ENCODE measurements at regions of chr19 and their contacts with region 1.

Region 1: DNA sequence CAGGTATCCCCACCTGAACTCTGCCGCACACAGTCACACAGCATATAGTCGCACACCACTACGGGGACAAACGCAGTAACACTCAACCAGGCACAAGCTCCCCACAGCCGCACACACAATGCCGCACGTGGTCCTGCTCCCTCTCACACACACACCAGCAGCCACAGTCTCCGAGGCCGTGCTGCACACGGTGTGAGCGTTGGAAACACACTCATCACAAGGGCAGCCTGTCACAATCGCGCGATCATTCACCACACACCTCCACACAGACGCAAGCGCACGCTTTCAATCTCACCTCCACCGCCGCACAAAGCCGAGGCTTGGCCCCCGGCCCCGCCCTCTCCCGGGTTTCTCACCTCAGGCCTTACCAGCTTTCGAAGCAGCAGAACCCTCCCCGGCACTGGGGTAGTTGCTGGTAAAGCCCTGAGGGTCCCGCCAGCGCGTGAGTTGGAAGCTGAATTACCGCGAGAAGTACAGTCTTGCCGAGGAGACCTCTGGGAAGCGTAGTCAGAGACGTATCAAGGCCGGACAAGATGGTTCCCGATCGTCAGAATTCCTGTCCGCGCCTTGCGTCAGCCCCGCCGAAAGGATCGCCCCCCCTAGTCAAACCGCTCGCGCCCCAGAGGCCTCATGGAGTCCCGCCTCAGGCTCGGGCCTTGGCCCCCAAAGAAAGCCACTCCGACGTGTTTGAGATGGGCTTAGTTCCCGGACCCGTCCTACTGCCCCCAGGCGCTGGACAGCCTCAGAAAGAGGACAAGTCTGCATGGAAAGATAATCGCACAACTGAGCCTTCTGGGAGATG is at the start of gene ZNF566:
- DNase-seq: peak; percentile 84 to 97 (median 95)
- H3K4me3 ChIP-seq: peak within 1 kb of the TSS; percentile 99
- H3K4me3 Mint-ChIP-seq: peak within 1 kb of the TSS; percentile 92 to 100 (median 98)
- H3K27ac ChIP-seq: peak within 1 kb of the TSS; percentile 90
- H3K27ac Mint-ChIP-seq: peak within 1 kb of the TSS; percentile 95 to 100 (median 98)
- H3K4me1 ChIP-seq: peaks cover 15% of the 10 kb centered on the region
- H3K4me1 Mint-ChIP-seq: peaks cover 34 to 42% (median 40%) of the 10 kb centered on the region in 3 donors
- H3K27me3 ChIP-seq: no peaks in the 10 kb centered on the region
- H3K27me3 Mint-ChIP-seq: peaks cover 0 to 4% of the 10 kb centered on the region in 2 donors
- total RNA-seq, gene ZNF566: 8.2 to 9.0 TPM

Region 2: DNA sequence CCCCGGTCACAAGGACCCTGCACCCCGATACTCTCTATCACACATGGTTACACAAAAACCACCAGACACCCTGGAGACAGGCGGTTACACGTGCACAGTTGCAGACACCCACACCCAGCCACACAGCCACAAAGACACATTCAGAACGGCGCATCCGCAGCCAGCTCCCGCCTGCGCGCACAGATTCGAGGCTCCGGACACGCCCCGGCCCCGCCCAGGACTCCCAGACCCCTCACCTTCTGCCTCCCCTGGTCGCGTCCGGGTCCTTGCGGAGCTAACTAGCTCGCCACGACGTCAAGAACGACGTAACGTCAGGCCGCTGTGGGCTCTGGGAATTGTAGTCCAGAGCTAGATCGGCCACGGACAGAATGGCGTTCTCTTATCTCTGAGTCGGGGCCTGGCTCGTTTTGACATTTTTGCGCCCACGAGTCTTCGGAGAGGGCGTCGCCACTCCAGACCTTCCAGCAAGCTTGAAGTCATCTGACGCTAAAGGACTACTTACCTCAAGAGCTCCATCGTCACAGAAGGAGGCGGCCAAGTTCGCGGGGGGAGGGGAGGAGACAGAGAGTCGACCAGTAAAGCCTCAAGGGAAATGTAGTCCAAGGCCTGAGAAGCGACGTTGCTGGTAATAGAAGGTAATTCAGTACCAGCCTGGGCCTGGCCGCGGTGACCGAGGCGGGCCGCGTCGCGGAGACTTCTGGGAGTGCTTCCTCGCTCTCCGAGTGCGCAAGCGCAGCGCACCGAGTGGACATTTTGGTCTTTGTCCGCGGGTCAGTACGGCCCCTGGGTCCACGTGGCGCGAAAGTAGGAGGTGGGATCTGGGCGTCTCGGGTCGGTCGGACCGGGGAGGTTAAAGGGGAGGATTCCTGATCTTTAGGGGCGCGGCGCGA is 274.7 kb before region 1 on chr19 and contains the starts of genes ZNF146 and ZNF565:
- CTCF ChIA-PET with region 1: no interaction called
- POLR2A ChIA-PET with region 1: interaction called, 21 read pairs
- DNase-seq: peak; percentile 93 to 97 (median 95)
- H3K4me3 ChIP-seq: peak within 1 kb of the TSS; percentile 96
- H3K4me3 Mint-ChIP-seq: no peak within 1 kb of the TSS
- H3K27ac ChIP-seq: peak within 1 kb of the TSS; percentile 95
- H3K27ac Mint-ChIP-seq: peak within 1 kb of the TSS in 1 of 8 donors; percentile 86
- H3K4me1 ChIP-seq: peaks cover 22% of the 10 kb centered on the region
- H3K4me1 Mint-ChIP-seq: peaks cover 23 to 36% (median 30%) of the 10 kb centered on the region in 3 donors
- H3K27me3 ChIP-seq: no peaks in the 10 kb centered on the region
- H3K27me3 Mint-ChIP-seq: no peaks in the 10 kb centered on the region
- total RNA-seq, gene ZNF146: 122 to 129 TPM
- total RNA-seq, gene ZNF565: 2.1 to 2.5 TPM

Region 3: GRCh38 chr19:36409841-36410240 is 79.5 kb before region 1 on chr19:
- CTCF ChIA-PET with region 1: no interaction called
- POLR2A ChIA-PET with region 1: no interaction called
- DNase-seq: no peak
- H3K4me3 ChIP-seq: no peak overlapping the region
- H3K4me3 Mint-ChIP-seq: peak overlapping the region in 1 of 7 donors; percentile 11
- H3K27ac ChIP-seq: no peak overlapping the region
- H3K27ac Mint-ChIP-seq: no peak overlapping the region
- H3K4me1 ChIP-seq: no peaks in the 10 kb centered on the region
- H3K4me1 Mint-ChIP-seq: peaks cover 0 to 18% (median 7%) of the 10 kb centered on the region in 3 donors
- H3K27me3 ChIP-seq: no peaks in the 10 kb centered on the region
- H3K27me3 Mint-ChIP-seq: no peaks in the 10 kb centered on the region

Region 4: DNA sequence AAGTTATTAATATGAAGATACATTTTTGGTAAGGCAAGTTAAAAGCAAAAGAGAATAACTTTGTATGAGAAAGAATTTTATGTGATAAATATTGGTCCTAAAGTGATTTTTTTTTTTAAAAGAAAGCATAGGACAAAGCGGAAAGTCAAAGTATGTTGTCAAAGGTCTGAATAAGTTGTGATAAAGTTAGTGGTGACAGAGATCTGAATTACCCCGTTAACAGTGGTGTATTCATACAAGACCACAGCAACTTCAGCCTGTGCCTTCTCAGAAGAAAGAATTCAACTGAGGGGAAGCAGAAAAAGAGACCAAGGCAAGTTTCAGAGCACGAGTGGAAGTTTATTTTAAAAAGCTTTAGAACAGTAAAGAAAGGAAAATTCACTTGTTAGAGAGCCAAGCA is 19.0 kb after region 1 on chr19:
- CTCF ChIA-PET with region 1: no interaction called
- POLR2A ChIA-PET with region 1: no interaction called
- DNase-seq: no peak
- H3K4me3 ChIP-seq: no peak overlapping the region
- H3K4me3 Mint-ChIP-seq: no peak overlapping the region
- H3K27ac ChIP-seq: no peak overlapping the region
- H3K27ac Mint-ChIP-seq: peak overlapping the region in 1 of 8 donors; percentile 32
- H3K4me1 ChIP-seq: no peaks in the 10 kb centered on the region
- H3K4me1 Mint-ChIP-seq: no peaks in the 10 kb centered on the region
- H3K27me3 ChIP-seq: no peaks in the 10 kb centered on the region
- H3K27me3 Mint-ChIP-seq: no peaks in the 10 kb centered on the region

Region 5: GRCh38 chr19:36528194-36528920 is 39.0 kb after region 1 on chr19 and contains the start of gene ZNF260:
- CTCF ChIA-PET with region 1: no interaction called
- POLR2A ChIA-PET with region 1: interaction called, 24 read pairs
- DNase-seq: peak; percentile 87 to 92 (median 91)
- H3K4me3 ChIP-seq: peak within 1 kb of the TSS; percentile 97
- H3K4me3 Mint-ChIP-seq: peak within 1 kb of the TSS; percentile 96 to 99 (median 98)
- H3K27ac ChIP-seq: peak within 1 kb of the TSS; percentile 86
- H3K27ac Mint-ChIP-seq: peak within 1 kb of the TSS; percentile 75 to 98 (median 96)
- H3K4me1 ChIP-seq: peaks cover 20% of the 10 kb centered on the region
- H3K4me1 Mint-ChIP-seq: peaks cover 23 to 32% (median 28%) of the 10 kb centered on the region in 3 donors
- H3K27me3 ChIP-seq: no peaks in the 10 kb centered on the region
- H3K27me3 Mint-ChIP-seq: peaks cover 0 to 2% of the 10 kb centered on the region in 2 donors
- total RNA-seq, gene ZNF260: 6.9 to 10.3 TPM

Region 6: GRCh38 chr19:36573020-36573885 is 83.9 kb after region 1 on chr19 and contains the start of gene ZNF529:
- CTCF ChIA-PET with region 1: no interaction called
- POLR2A ChIA-PET with region 1: interaction called, 18 read pairs
- DNase-seq: peak; percentile 84 to 93 (median 89)
- H3K4me3 ChIP-seq: peak within 1 kb of the TSS; percentile 96
- H3K4me3 Mint-ChIP-seq: peak within 1 kb of the TSS; percentile 89 to 98 (median 93)
- H3K27ac ChIP-seq: peak within 1 kb of the TSS; percentile 99
- H3K27ac Mint-ChIP-seq: peak within 1 kb of the TSS; percentile 96 to 100 (median 98)
- H3K4me1 ChIP-seq: peaks cover 20% of the 10 kb centered on the region
- H3K4me1 Mint-ChIP-seq: peaks cover 50 to 58% (median 55%) of the 10 kb centered on the region in 3 donors
- H3K27me3 ChIP-seq: no peaks in the 10 kb centered on the region
- H3K27me3 Mint-ChIP-seq: peaks cover 0 to 4% of the 10 kb centered on the region in 2 donors
- total RNA-seq, gene ZNF529: 15.6 to 16.4 TPM

Region 7: DNA sequence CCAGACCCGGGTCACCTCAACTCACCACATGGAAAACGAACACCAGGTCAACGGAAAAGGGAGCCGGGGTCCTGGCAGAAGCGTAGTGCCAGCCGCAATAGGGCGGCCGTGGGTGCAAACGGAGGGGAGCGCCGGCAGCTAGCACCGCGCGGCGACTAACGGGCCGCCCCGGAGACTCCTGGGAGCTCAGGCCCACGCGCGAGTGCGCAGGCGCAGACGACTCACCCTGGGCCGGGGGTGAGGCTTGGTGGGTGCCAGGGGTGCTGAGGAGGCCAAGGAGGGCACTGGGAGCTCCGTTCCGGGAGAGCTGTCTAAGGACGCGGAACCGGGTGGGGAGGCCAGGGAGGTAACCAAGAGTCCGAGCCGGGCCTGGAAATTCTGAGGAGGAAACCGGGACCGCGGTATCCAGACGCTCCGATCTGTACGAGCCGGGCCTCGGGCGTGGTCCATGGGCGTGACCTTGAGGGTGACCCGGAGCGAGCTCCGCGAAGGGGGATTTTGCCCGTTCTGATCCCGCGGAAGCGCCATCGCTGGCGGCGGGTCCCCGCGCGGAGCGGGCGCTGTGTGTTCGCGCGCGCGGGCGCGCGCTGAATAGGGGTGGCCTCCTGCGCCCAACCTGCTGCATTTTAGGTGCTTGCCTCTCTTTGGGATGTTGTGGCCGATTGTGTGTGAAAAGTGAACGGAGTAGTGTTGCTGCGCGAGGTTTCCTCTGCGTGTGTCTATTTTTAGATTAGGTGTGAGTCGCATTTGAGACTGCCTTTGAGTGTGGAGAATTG is 116.0 kb after region 1 on chr19 and contains the start of gene ZNF382:
- CTCF ChIA-PET with region 1: no interaction called
- POLR2A ChIA-PET with region 1: interaction called, 12 read pairs
- DNase-seq: peak; percentile 76 to 91 (median 81)
- H3K4me3 ChIP-seq: peak within 1 kb of the TSS; percentile 91
- H3K4me3 Mint-ChIP-seq: peak within 1 kb of the TSS; percentile 83 to 100 (median 89)
- H3K27ac ChIP-seq: peak within 1 kb of the TSS; percentile 93
- H3K27ac Mint-ChIP-seq: peak within 1 kb of the TSS; percentile 81 to 99 (median 93)
- H3K4me1 ChIP-seq: peaks cover 13% of the 10 kb centered on the region
- H3K4me1 Mint-ChIP-seq: peaks cover 27 to 31% (median 31%) of the 10 kb centered on the region in 3 donors
- H3K27me3 ChIP-seq: no peaks in the 10 kb centered on the region
- H3K27me3 Mint-ChIP-seq: no peaks in the 10 kb centered on the region
- total RNA-seq, gene ZNF382: 10.0 to 10.3 TPM